GM12878 (cell line): ENCODE measurements at regions of chr11 and their contacts with region 1.

Region 1: GRCh38 chr11:102553835-102554282 is 23.3 kb upstream of the MMP7 start:
- DNase-seq: peak; percentile 78
- ATAC-seq: peak; percentile 85
- H3K4me3 ChIP-seq: no peak overlapping the region
- H3K27ac ChIP-seq: peak overlapping the region; percentile 40; the same call in 1 of the 2 replicates
- H3K4me1 ChIP-seq: peaks cover 40% of the 10 kb centered on the region
- H3K27me3 ChIP-seq: no peaks in the 10 kb centered on the region
- CTCF ChIP-seq: no peak
- EP300 ChIP-seq: peak; percentile 70 to 79; a peak in 3 of 4 replicates
- POLR2A ChIP-seq: no peak
- RAD21 ChIP-seq: peak; percentile 30; the same call in 1 of the 2 replicates

Region 2: GRCh38 chr11:102485095-102485722 is 68.7 kb before region 1 on chr11:
- CTCF ChIA-PET with region 1: no interaction called
- POLR2A ChIA-PET with region 1: no interaction called
- RAD21 ChIA-PET with region 1: no interaction called
- SMC1A ChIA-PET with region 1: no interaction called
- in situ Hi-C with region 1: no loop called
- intact Hi-C with region 1: no loop called
- DNase-seq: no peak
- ATAC-seq: no peak
- H3K4me3 ChIP-seq: no peak overlapping the region
- H3K27ac ChIP-seq: no peak overlapping the region
- H3K4me1 ChIP-seq: peaks cover 9% of the 10 kb centered on the region
- H3K27me3 ChIP-seq: 0 out of 4 replicates have a peak, but pooled peaks cover 0 to 3% of the 10 kb centered on the region in 2 experiments
- CTCF ChIP-seq: no peak
- EP300 ChIP-seq: no peak
- POLR2A ChIP-seq: no peak
- RAD21 ChIP-seq: no peak

Region 3: GRCh38 chr11:102592634-102593581 is 39.0 kb after region 1 on chr11:
- CTCF ChIA-PET with region 1: interaction called, 27 read pairs
- POLR2A ChIA-PET with region 1: interaction called, 23 read pairs
- RAD21 ChIA-PET with region 1: interaction called, 26 read pairs
- SMC1A ChIA-PET with region 1: interaction called, 399 read pairs
- in situ Hi-C with region 1: no loop called
- intact Hi-C with region 1: no loop called
- DNase-seq: no peak
- ATAC-seq: peak; percentile 26; the same call in 2 of the 3 replicates
- H3K4me3 ChIP-seq: no peak overlapping the region
- H3K27ac ChIP-seq: no peak overlapping the region
- H3K4me1 ChIP-seq: peaks cover 32% of the 10 kb centered on the region
- H3K27me3 ChIP-seq: no peaks in the 10 kb centered on the region; a peak in 1 of 4 replicates
- CTCF ChIP-seq: peak; percentile 25 to 70 (median 57)
- EP300 ChIP-seq: no peak
- POLR2A ChIP-seq: no peak
- RAD21 ChIP-seq: peak; percentile 28

Region 4: DNA sequence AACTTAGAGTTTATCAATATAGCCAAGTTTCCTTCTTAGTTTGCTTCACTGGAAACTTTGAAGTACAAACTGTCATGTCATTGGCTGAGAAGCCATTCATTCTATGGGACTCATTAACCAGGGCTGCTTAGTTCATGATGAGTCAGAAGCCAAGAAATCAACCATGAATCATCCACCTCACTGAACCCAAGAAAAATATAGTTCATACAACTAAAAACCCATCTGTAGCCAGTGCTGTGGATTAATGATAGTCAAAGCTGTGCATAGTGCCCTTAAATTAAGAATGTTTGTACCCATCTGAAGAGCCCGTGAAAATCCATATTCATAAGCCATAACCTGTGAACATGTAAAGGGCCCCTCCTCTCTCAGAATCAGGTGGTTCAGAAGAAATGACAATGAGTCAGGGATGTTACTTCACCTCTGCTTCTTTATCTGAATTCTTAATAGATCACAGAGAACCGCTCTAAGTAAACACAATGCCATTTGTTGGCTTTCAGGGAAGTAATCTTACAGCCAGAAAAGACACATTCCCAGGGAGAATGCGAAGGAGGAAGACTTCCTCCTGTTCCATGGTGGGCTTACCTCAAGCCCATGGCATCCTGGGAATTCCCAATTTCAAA is 45.9 kb after region 1 on chr11:
- CTCF ChIA-PET with region 1: interaction called, 10 read pairs
- POLR2A ChIA-PET with region 1: interaction called, 19 read pairs
- RAD21 ChIA-PET with region 1: interaction called, 47 read pairs
- SMC1A ChIA-PET with region 1: interaction called, 399 read pairs
- in situ Hi-C with region 1: no loop called
- intact Hi-C with region 1: no loop called
- DNase-seq: no peak
- ATAC-seq: peak; percentile 94
- H3K4me3 ChIP-seq: no peak overlapping the region
- H3K27ac ChIP-seq: 0 out of 2 replicates have a peak overlapping the region, but pooled peaks have one; percentile 16
- H3K4me1 ChIP-seq: peaks cover 3% of the 10 kb centered on the region; the same call in 1 of the 2 replicates
- H3K27me3 ChIP-seq: no peaks in the 10 kb centered on the region
- CTCF ChIP-seq: no peak
- EP300 ChIP-seq: peak; percentile 35 to 50; a peak in 3 of 4 replicates
- POLR2A ChIP-seq: no peak
- RAD21 ChIP-seq: no peak

Region 5: DNA sequence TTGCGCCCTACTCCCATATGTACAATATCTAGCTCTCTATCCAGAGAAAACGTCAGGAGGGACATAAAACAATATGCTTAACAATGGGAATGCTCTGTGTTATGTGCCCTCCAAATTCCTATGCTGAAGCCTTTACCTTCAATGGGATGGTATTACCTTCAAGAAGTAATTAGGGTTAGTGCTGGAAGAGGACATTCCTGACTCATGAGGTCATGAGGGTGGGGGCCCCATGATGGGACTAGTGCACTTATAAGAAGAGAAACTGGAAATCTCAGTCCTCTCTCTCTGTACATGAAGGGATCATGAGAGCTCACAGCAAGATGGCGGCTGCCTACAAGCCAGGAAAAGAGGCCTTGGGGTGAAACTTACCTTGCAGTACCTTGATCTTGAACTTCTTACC is 51.0 kb after region 1 on chr11:
- CTCF ChIA-PET with region 1: interaction called, 4 read pairs
- POLR2A ChIA-PET with region 1: interaction called, 67 read pairs
- RAD21 ChIA-PET with region 1: interaction called, 143 read pairs
- SMC1A ChIA-PET with region 1: interaction called, 399 read pairs
- in situ Hi-C with region 1: no loop called
- intact Hi-C with region 1: no loop called
- DNase-seq: no peak
- ATAC-seq: no peak
- H3K4me3 ChIP-seq: no peak overlapping the region
- H3K27ac ChIP-seq: no peak overlapping the region
- H3K4me1 ChIP-seq: peaks cover 2% of the 10 kb centered on the region; the same call in 1 of the 2 replicates
- H3K27me3 ChIP-seq: no peaks in the 10 kb centered on the region
- CTCF ChIP-seq: no peak
- EP300 ChIP-seq: no peak
- POLR2A ChIP-seq: no peak
- RAD21 ChIP-seq: no peak

Region 6: GRCh38 chr11:102680945-102681344 is 127.1 kb after region 1 on chr11:
- CTCF ChIA-PET with region 1: no interaction called
- POLR2A ChIA-PET with region 1: no interaction called
- RAD21 ChIA-PET with region 1: no interaction called
- SMC1A ChIA-PET with region 1: no interaction called
- in situ Hi-C with region 1: no loop called
- intact Hi-C with region 1: no loop called
- DNase-seq: no peak
- ATAC-seq: no peak
- H3K4me3 ChIP-seq: no peak overlapping the region
- H3K27ac ChIP-seq: no peak overlapping the region
- H3K4me1 ChIP-seq: no peaks in the 10 kb centered on the region
- H3K27me3 ChIP-seq: peaks cover 0 to 2% of the 10 kb centered on the region in 2 experiments; a peak in 2 of 4 replicates
- CTCF ChIP-seq: no peak
- EP300 ChIP-seq: no peak
- POLR2A ChIP-seq: no peak
- RAD21 ChIP-seq: no peak

Region 7: GRCh38 chr11:103108933-103109817 is 555.3 kb after region 1 on chr11 and contains the start of gene DYNC2H1:
- CTCF ChIA-PET with region 1: no interaction called
- POLR2A ChIA-PET with region 1: no interaction called
- RAD21 ChIA-PET with region 1: no interaction called
- SMC1A ChIA-PET with region 1: no interaction called
- in situ Hi-C with region 1: no loop called
- intact Hi-C with region 1: no loop called
- DNase-seq: peak; percentile 58
- ATAC-seq: peak; percentile 99
- H3K4me3 ChIP-seq: peak within 1 kb of the TSS; percentile 78
- H3K27ac ChIP-seq: no peak within 1 kb of the TSS
- H3K4me1 ChIP-seq: peaks cover 3% of the 10 kb centered on the region; the same call in 1 of the 2 replicates
- H3K27me3 ChIP-seq: no peaks in the 10 kb centered on the region; a peak in 2 of 4 replicates
- CTCF ChIP-seq: peak; percentile 44 to 58 (median 54)
- EP300 ChIP-seq: no peak
- POLR2A ChIP-seq: no peak
- RAD21 ChIP-seq: peak; percentile 27; the same call in 1 of the 2 replicates
- polyA plus RNA-seq, gene DYNC2H1: not detected